ENCODE measurements at regions of chr6 and their contacts with region 1.

Region 1: GRCh38 chr6:26003102-26003694 is 40.6 kb downstream of the TRIM38 start:
- DNase-seq: peak; percentile 52
- H3K4me3 ChIP-seq: no peak overlapping the region
- H3K27ac ChIP-seq: no peak overlapping the region
- H3K4me1 ChIP-seq: no peaks in the 10 kb centered on the region
- CTCF ChIP-seq: peak; percentile 92

Region 2: DNA sequence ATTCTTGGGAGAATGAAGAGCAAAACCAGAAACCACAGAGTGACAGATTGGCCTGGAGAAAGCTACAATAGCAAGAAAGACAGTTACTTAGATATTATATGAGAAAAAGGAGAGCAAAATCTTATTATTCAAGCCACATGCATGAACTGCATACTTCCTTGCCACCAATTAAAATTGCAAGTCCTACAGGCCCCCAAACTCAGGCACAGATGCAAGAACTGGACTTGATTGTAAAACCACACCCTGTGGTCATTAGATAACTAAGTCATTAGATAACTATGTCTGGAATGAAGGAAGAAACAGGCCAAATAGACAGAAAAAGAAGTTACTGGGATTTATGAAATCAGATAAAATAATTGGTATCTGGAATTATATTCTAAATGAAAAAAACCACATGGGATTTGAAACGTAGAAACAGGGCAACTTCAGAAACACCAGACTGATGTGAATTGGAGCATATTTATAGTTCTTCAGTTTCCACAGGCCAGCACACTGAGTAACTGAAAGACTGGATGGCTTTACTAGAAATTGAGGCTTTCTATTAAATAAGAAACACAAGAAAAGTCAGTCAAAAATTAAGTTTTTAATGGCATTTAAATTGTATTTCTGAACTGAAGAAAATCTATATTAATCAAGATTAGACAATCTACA is 773.4 kb before region 1 on chr6:
- CTCF ChIA-PET with region 1: no interaction called
- POLR2A ChIA-PET with region 1: no interaction called
- intact Hi-C with region 1: loop called (anchors 5 kb)
- DNase-seq: no peak
- H3K4me3 ChIP-seq: no peak overlapping the region
- H3K27ac ChIP-seq: no peak overlapping the region
- H3K4me1 ChIP-seq: peaks cover 14% of the 10 kb centered on the region
- CTCF ChIP-seq: no peak

Region 3: DNA sequence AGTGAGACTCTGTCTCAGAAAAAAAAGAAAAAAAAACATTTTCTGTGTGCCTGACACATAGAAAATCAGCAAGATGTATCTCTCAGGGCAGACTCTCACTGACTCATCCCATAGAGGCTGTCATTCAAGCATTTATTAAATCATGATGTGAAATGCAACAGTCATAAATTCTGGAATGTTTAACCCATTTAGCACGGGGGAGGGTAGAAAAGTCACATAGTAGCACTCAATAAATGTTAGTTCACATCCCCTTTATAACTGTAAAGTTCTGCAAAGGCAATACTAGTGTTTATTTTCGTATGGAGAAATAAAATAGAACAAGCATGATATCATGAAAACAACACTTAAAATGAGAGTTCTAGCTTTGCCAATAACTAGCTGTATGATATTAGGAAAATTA is 739.5 kb before region 1 on chr6:
- CTCF ChIA-PET with region 1: no interaction called
- POLR2A ChIA-PET with region 1: no interaction called
- intact Hi-C with region 1: no loop called
- DNase-seq: no peak
- H3K4me3 ChIP-seq: no peak overlapping the region
- H3K27ac ChIP-seq: no peak overlapping the region
- H3K4me1 ChIP-seq: peaks cover 12% of the 10 kb centered on the region
- CTCF ChIP-seq: no peak

Region 4: GRCh38 chr6:25788305-25788922 is 214.8 kb before region 1 on chr6:
- CTCF ChIA-PET with region 1: no interaction called
- POLR2A ChIA-PET with region 1: no interaction called
- intact Hi-C with region 1: loop called (anchors 1 kb)
- DNase-seq: peak; percentile 35
- H3K4me3 ChIP-seq: no peak overlapping the region
- H3K27ac ChIP-seq: no peak overlapping the region
- H3K4me1 ChIP-seq: no peaks in the 10 kb centered on the region
- CTCF ChIP-seq: peak; percentile 75

Region 5: GRCh38 chr6:25927756-25928216 is 75.4 kb before region 1 on chr6:
- CTCF ChIA-PET with region 1: no interaction called
- POLR2A ChIA-PET with region 1: no interaction called
- intact Hi-C with region 1: no loop called
- DNase-seq: no peak
- H3K4me3 ChIP-seq: no peak overlapping the region
- H3K27ac ChIP-seq: no peak overlapping the region
- H3K4me1 ChIP-seq: no peaks in the 10 kb centered on the region
- CTCF ChIP-seq: no peak

Region 6: GRCh38 chr6:26249957-26250697 is 246.9 kb after region 1 on chr6:
- CTCF ChIA-PET with region 1: no interaction called
- POLR2A ChIA-PET with region 1: no interaction called
- intact Hi-C with region 1: no loop called
- DNase-seq: no peak
- H3K4me3 ChIP-seq: peak overlapping the region; percentile 23
- H3K27ac ChIP-seq: no peak overlapping the region
- H3K4me1 ChIP-seq: peaks cover 27% of the 10 kb centered on the region
- CTCF ChIP-seq: peak; percentile 30; the same call in 1 of the 2 replicates

Region 7: DNA sequence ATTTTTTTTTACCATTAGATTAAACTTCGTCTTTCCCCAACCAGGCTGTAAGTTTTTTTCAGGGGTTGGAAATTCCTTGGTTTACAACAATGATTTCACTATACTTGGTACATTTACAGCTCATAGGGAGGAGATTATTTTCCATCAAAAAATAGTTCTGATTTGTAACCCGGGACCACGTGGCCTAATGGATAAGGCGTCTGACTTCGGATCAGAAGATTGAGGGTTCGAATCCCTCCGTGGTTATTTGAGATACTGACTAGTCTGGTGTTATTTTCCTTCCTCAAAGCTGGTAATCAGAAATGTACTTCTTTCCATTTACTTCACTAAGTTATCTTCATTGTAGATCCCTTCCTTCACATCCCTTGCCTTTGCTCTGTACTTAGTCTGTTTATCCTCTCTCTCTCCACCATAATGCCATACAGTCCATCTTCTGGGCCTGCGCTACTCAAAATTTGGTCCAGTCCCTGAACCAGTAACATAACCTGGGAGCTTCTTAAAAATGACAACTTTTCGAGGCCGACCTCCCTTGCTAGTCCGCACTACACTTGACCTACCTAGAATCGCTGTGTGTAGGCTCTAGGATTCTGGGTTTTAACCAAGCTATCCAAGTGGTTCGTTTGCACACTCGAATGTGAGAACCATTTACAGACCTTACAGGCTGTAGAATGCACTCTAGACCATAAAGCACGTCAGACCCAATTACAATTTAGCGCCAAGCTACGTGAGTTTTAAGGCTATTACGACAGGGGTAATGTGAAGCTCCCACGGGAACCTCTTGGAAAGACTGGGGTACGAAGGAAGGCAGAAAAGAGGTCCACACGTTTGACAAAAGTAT is 319.7 kb after region 1 on chr6:
- CTCF ChIA-PET with region 1: no interaction called
- POLR2A ChIA-PET with region 1: no interaction called
- intact Hi-C with region 1: no loop called
- DNase-seq: peak; percentile 74
- H3K4me3 ChIP-seq: peak overlapping the region; percentile 66
- H3K27ac ChIP-seq: peak overlapping the region; percentile 52
- H3K4me1 ChIP-seq: peaks cover 36% of the 10 kb centered on the region
- CTCF ChIP-seq: no peak